ENCODE measurements at regions of chr4 and their contacts with region 1.

Region 1: GRCh38 chr4:86720508-86721068 is 126.5 kb downstream of the PTPN13 start:
- DNase-seq: no peak

Region 2: DNA sequence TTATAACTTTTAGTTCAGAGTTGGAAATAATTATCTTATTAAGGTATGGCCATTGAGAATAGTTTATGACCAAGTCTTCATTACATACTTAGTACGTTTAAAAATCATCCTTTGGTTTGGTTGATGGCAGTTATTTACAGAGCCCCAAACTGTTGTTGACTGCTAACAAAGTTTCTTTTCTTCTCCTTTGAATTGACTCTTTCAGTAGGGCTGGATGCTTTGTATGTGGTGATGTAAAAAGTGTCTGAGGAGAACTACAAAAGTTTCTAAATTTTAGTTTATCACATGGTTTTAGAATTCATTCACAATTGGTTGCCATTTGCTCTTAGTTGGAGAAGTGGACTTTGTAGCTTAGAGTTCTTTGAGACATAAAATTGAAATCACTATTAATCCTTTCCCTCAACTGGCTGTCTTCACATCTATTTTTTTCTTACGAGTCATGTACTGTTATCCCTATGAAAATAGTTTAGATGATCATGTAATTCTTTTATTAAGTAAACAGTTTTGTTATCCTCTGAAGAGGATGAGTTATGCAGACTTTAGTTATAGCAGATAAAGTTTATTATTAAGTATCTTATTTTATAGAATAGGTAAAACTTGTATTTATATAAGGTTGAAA is 111.7 kb before region 1 on chr4:
- intact Hi-C with region 1: loop called (anchors 10 kb)
- DNase-seq: no peak